Naive thymus-derived CD4-positive, alpha-beta T cell (primary cell): ENCODE measurements at regions of chr7 and their contacts with region 1.

Region 1: DNA sequence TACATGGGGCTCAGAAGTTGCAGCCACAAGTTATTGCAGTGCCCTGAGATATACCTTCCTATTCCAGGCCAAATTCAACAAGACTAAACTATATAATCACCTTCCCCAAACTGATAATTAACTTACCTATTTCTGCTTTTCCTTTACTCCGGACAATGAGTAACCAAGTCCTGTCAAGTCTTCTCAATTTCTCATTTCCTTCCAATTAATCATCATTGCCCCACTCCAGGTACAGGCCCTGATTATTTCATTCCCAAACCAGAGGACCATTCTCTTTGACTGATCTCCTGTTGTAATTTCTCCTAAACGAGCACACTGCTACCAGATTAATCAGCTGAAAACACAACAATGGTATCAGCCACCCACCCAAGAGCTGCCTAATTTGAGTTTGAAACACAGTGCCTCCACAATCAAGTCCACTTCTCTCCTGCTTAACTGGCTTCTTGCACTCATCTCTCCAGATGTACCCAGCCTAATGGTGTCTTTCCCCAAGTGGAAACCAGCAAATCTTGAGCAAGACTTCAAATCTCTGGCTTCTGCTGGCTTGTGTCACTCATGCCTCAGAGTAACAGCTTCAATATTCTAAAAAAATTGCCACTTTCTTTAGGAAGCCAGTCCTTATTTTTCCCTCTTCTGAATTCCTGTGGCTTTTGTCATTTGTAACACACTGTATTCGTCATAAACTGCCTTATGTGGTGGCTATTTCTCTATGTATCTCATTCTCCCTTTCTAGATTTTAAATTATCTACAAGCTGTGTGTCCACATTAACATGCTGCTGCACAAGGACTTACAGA is 89.1 kb downstream of the CDK6 start:
- DNase-seq: no peak
- ATAC-seq: no peak
- H3K4me3 ChIP-seq: no peak overlapping the region
- H3K4me3 Mint-ChIP-seq: no peak overlapping the region
- H3K27ac ChIP-seq: no peak overlapping the region
- H3K27ac Mint-ChIP-seq: peak overlapping the region in 3 of 9 donors; percentile 2 to 65 (median 22)
- H3K4me1 ChIP-seq: no peaks in the 10 kb centered on the region
- H3K4me1 Mint-ChIP-seq: peaks cover 4 to 62% (median 23%) of the 10 kb centered on the region in 7 donors
- H3K27me3 ChIP-seq: no peaks in the 10 kb centered on the region
- H3K27me3 Mint-ChIP-seq: no peaks in the 10 kb centered on the region

Region 2: GRCh38 chr7:92731335-92732063 is 15.7 kb before region 1 on chr7:
- CTCF ChIA-PET with region 1: no interaction called
- POLR2A ChIA-PET with region 1: no interaction called
- intact Hi-C with region 1: loop called in 1 of 2 experiments (anchors 2 kb)
- DNase-seq: peak in 1 of 9 donors; percentile 35
- ATAC-seq: peak; percentile 63
- H3K4me3 ChIP-seq: no peak overlapping the region
- H3K4me3 Mint-ChIP-seq: peak overlapping the region in 1 of 10 donors; percentile 59
- H3K27ac ChIP-seq: no peak overlapping the region
- H3K27ac Mint-ChIP-seq: peak overlapping the region in 1 of 9 donors; percentile 67
- H3K4me1 ChIP-seq: no peaks in the 10 kb centered on the region
- H3K4me1 Mint-ChIP-seq: peaks cover 16 to 60% (median 27%) of the 10 kb centered on the region in 7 donors
- H3K27me3 ChIP-seq: no peaks in the 10 kb centered on the region
- H3K27me3 Mint-ChIP-seq: no peaks in the 10 kb centered on the region